Motor neuron (in vitro differentiated cells): ENCODE measurements at regions of chr14 and their contacts with region 1.

Region 1: DNA sequence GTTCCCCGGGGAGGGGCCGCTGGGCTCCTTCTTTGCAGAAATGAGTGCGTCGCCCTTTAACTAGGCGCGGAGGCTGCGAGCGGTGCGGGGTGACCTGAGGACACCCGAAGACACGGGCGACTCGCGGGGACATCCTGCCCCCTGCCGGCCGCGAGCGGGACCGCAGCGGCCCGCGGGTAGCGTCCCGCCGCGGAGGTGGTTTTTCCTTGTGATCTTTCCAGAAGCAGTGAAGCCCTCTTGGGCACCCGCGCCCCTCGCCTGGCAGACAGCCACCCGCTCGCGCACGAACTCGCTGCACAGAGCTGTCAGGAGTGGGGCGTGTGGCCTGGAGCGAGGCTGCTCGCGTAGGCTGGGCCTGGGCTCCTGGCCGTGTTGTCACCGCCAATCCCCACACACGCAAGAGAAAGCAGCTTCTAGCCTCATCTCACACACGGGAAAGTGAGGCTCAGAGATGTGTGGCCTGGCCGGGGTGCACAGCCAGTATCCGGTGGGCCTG is 67.2 kb downstream of the DIO3 start:
- ATAC-seq: peak; percentile 73 to 96 (median 78)
- H3K4me3 ChIP-seq: no peak overlapping the region
- H3K27ac ChIP-seq: no peak overlapping the region
- H3K4me1 ChIP-seq: peaks cover 29 to 32% of the 10 kb centered on the region in 2 donors

Region 2: GRCh38 chr14:100031536-100032281 is 1596.8 kb before region 1 on chr14:
- in situ Hi-C with region 1: no loop called
- ATAC-seq: peak in 6 of 8 experiments; percentile 47 to 91 (median 80)
- H3K4me3 ChIP-seq: no peak overlapping the region
- H3K27ac ChIP-seq: no peak overlapping the region
- H3K4me1 ChIP-seq: peaks cover 0 to 2% of the 10 kb centered on the region in 2 donors

Region 3: GRCh38 chr14:100375963-100376735 is 1252.4 kb before region 1 on chr14:
- in situ Hi-C with region 1: loop called in 2 of 9 experiments (anchors 25 kb)
- ATAC-seq: peak; percentile 46 to 92 (median 88)
- H3K4me3 ChIP-seq: peak within 1 kb of the TSS; percentile 52 to 79 (median 72)
- H3K27ac ChIP-seq: peak within 1 kb of the TSS; percentile 95 to 96
- H3K4me1 ChIP-seq: peaks cover 36 to 46% of the 10 kb centered on the region in 2 donors

Region 4: GRCh38 chr14:100900837-100901390 is 727.6 kb before region 1 on chr14:
- in situ Hi-C with region 1: loop called in 4 of 9 experiments (anchors 25 kb)
- ATAC-seq: peak in 7 of 8 experiments; percentile 33 to 48 (median 42)
- H3K4me3 ChIP-seq: no peak overlapping the region
- H3K27ac ChIP-seq: no peak overlapping the region
- H3K4me1 ChIP-seq: peaks cover 54 to 87% of the 10 kb centered on the region in 2 donors

Region 5: GRCh38 chr14:101077481-101078074 is 550.9 kb before region 1 on chr14:
- in situ Hi-C with region 1: loop called in 1 of 9 experiments (anchors 25 kb)
- ATAC-seq: peak in 7 of 8 experiments; percentile 1 to 72 (median 59)
- H3K4me3 ChIP-seq: peak overlapping the region; percentile 1 to 22 (median 9)
- H3K27ac ChIP-seq: peak overlapping the region; percentile 55 to 70
- H3K4me1 ChIP-seq: peaks cover 32 to 42% of the 10 kb centered on the region in 2 donors

Region 6: DNA sequence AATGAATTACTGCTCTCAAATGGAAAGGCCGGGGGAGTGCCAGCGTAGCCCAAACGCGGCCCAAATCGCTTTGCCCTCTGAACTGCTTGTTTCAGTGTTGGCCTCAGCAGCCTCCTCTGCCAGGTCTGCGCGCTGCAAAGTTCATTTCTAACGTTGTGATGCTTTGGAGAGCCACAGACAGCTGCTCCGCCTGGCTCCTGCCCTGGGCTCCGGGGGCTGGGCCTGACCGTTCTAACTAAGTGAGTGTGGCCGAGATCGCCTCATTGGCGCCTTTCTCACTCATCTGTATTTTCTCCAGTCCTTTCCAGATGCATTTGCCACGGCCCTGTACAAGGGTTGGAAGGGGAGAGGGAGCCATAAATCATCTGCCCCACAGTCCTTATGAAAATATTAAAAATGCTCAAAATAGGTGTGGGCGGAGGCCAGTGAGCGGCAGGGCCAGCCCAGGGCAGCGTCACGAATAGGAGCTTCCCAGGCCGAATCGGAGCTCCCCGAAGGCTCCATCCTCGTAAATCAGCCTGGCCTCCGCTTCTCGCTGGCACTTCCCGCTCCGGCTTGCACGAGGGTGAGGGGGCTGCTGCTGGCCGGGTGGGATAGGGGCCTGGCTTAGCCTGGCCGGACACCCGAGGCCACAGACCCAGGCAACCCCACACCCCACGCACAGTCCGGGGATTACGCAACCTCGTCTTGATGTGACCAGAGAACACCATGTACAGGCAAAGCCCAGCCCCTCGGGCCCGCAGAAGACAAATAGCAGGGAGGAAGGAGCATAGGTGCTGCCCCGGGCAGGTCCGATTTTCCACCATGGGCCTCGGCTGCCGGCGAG is 263.8 kb before region 1 on chr14:
- in situ Hi-C with region 1: no loop called
- ATAC-seq: peak in 7 of 8 experiments; percentile 60 to 93 (median 89)
- H3K4me3 ChIP-seq: no peak overlapping the region
- H3K27ac ChIP-seq: peak overlapping the region in 1 of 2 donors; percentile 51
- H3K4me1 ChIP-seq: peaks cover 23 to 39% of the 10 kb centered on the region in 2 donors